ENCODE measurements at regions of chr6 and their contacts with region 1.

Region 1: DNA sequence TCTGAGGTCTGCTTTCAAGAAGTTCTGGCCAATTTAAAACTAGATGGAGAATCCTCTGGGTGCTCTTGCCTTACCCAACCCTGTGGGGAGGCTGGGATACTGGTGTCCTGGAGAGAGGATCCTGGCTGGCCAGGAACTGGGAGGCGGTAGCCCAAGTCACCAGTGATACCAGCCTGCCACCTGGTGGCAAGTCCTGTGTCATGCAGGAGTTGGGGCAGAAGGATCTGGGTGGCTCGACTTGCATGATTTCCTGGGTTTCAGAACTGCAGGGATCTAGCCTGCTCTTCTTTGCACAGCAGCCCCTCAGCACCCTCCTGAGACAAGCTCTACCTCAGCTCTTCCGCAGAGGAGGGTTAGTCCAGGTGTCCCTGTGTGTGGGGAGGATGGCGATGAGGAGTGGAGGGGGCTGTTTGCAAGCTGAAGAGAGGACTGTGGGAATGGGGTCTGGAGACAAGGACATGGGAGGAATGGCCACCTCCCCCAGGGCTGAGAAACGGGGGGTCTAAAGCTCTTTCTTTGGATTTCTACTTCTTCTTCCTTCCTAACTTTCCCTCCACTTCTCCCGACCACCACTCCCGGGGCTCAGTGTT is 4.2 kb downstream of the KCNK17 start:
- DNase-seq: peak; percentile 53 to 71
- ATAC-seq: peak; percentile 66 to 80 (median 75)
- H3K4me3 ChIP-seq: no peak overlapping the region
- H3K27ac ChIP-seq: no peak overlapping the region
- H3K4me1 ChIP-seq: peaks cover 4 to 17% (median 15%) of the 10 kb centered on the region in 9 donors
- H3K27me3 ChIP-seq: peaks cover 0 to 54% (median 41%) of the 10 kb centered on the region in 7 donors
- CTCF ChIP-seq: peak; percentile 70 to 90 (median 86)

Region 2: GRCh38 chr6:38973178-38974054 is 336.6 kb before region 1 on chr6:
- intact Hi-C with region 1: loop called in 5 of 10 experiments (anchors 2 to 5 kb)
- DNase-seq: peak in 1 of 2 donors; percentile 14
- ATAC-seq: peak in 7 of 8 donors; percentile 38 to 80 (median 64)
- H3K4me3 ChIP-seq: no peak overlapping the region
- H3K27ac ChIP-seq: no peak overlapping the region
- H3K4me1 ChIP-seq: peaks cover 0 to 16% (median 0%) of the 10 kb centered on the region in 9 donors
- H3K27me3 ChIP-seq: peaks cover 0 to 15% (median 7%) of the 10 kb centered on the region in 7 donors
- CTCF ChIP-seq: peak; percentile 23 to 76 (median 59)

Region 3: DNA sequence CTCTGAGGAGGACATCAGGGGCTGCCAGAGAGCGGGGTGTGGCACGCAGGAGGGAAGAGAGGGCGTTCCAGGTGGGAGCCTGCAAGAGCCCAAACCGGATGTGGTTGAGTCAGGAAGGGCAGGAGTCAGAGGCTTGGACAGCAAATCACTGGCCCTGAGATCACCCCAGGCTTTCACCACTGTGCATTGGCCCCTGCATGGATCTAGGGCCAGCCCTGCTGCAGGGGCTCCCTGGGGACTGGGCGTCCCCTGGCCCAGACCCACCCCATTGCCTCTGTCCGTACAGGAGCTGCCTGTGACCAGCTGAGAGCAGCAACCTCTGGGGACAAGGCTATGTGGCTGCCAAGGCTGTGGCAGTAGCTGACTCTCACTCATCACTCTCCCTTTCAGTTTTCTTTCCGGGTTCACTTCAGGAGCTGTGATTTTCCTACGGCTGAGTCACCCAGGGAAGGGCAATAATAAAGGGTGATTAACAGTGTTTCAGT is 29.7 kb before region 1 on chr6:
- intact Hi-C with region 1: no loop called
- DNase-seq: no peak
- ATAC-seq: peak in 4 of 8 donors; percentile 22 to 83 (median 50)
- H3K4me3 ChIP-seq: no peak overlapping the region
- H3K27ac ChIP-seq: no peak overlapping the region
- H3K4me1 ChIP-seq: no peaks in the 10 kb centered on the region
- H3K27me3 ChIP-seq: peaks cover 0 to 26% (median 5%) of the 10 kb centered on the region in 7 donors
- CTCF ChIP-seq: no peak